Activated CD4-positive, alpha-beta memory T cell treated with anti-CD3 and anti-CD28 coated beads, Interleukin-2, amount 10 ng/mL, durations not matched to agents 7 days and 5 days (primary cell): ENCODE measurements at regions of chr2 and their contacts with region 1.

Region 1: GRCh38 chr2:43194121-43194869 is 32.1 kb downstream of the ZFP36L2 start:
- DNase-seq: no peak
- H3K4me3 Mint-ChIP-seq: peak overlapping the region; percentile 72
- H3K27ac Mint-ChIP-seq: peak overlapping the region; percentile 94
- H3K4me1 Mint-ChIP-seq: peaks cover 54% of the 10 kb centered on the region
- H3K27me3 Mint-ChIP-seq: no peaks in the 10 kb centered on the region

Region 2: GRCh38 chr2:43178602-43179542 is 15.4 kb before region 1 on chr2:
- CTCF ChIA-PET with region 1: interaction called, 7 read pairs
- POLR2A ChIA-PET with region 1: interaction called, 23 read pairs
- DNase-seq: peak; percentile 43
- H3K4me3 Mint-ChIP-seq: no peak overlapping the region
- H3K27ac Mint-ChIP-seq: peak overlapping the region; percentile 87
- H3K4me1 Mint-ChIP-seq: peaks cover 69% of the 10 kb centered on the region
- H3K27me3 Mint-ChIP-seq: no peaks in the 10 kb centered on the region

Region 3: DNA sequence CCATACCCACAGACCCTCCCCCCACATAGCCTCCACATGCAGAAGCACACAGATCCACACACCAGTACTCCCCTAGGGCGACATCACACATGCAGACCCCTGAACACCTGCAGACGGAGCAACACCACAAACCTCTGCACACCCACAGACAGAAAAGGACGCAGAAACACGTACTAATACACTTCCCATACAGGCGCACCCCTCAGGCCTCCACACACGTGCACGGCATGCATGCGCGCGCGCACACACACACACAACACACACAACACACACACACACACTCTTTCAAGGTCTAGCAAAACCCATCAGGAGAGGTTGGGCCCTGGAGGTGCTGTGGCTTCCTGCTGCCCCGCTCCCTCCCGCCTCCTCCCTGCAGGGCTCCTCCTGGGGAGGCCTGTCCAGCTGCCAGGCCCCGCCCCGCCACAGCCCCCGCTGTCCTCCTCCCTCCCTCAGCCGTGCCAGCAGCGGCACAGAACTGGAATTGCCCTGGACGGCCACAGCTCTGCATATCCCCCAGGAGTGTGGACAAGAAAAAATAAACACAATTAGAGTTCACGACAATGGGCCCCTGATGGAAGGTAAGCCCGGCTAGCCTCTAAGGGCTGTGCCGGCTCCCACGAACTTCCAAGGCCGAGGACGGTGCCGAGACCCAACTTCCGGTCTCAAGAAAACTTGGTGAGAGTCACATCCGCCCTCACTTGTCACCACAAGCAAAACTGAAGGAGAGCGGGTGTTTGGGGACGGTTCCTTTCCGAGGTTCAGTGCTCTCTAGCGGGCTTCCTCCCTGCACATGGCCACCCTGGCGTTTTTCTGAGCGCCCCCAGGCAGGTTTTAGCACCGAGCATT is 25.3 kb after region 1 on chr2:
- CTCF ChIA-PET with region 1: interaction called, 15 read pairs
- POLR2A ChIA-PET with region 1: interaction called, 80 read pairs
- DNase-seq: peak; percentile 88
- H3K4me3 Mint-ChIP-seq: peak overlapping the region; percentile 95
- H3K27ac Mint-ChIP-seq: peak overlapping the region; percentile 98
- H3K4me1 Mint-ChIP-seq: peaks cover 48% of the 10 kb centered on the region
- H3K27me3 Mint-ChIP-seq: no peaks in the 10 kb centered on the region

Region 4: GRCh38 chr2:43251171-43251731 is 57.0 kb after region 1 on chr2:
- CTCF ChIA-PET with region 1: no interaction called
- POLR2A ChIA-PET with region 1: no interaction called
- DNase-seq: no peak
- H3K4me3 Mint-ChIP-seq: no peak overlapping the region
- H3K27ac Mint-ChIP-seq: no peak overlapping the region
- H3K4me1 Mint-ChIP-seq: no peaks in the 10 kb centered on the region
- H3K27me3 Mint-ChIP-seq: no peaks in the 10 kb centered on the region

Region 5: DNA sequence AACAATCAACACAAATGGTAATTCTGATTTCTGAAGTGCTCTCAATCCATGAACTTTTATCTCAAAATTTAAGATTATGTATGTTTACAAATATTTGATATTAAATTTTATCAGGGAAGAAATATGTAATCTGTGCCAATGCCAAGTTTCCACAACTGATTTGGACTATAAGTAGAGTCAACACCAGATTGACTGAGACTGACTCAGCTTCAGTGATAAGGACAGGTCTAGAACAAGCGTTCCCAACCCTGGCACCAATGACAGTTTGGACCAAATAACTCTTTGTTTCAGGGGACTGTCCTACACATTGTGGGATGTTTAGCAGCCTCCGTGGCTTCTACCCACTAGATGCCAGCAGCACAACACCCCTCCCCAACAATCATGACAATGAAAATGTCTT is 236.2 kb after region 1 on chr2:
- CTCF ChIA-PET with region 1: no interaction called
- POLR2A ChIA-PET with region 1: no interaction called
- DNase-seq: no peak
- H3K4me3 Mint-ChIP-seq: no peak overlapping the region
- H3K27ac Mint-ChIP-seq: no peak overlapping the region
- H3K4me1 Mint-ChIP-seq: peaks cover 23% of the 10 kb centered on the region
- H3K27me3 Mint-ChIP-seq: no peaks in the 10 kb centered on the region